ENCODE measurements at regions of chr4 and their contacts with region 1.

Region 1: DNA sequence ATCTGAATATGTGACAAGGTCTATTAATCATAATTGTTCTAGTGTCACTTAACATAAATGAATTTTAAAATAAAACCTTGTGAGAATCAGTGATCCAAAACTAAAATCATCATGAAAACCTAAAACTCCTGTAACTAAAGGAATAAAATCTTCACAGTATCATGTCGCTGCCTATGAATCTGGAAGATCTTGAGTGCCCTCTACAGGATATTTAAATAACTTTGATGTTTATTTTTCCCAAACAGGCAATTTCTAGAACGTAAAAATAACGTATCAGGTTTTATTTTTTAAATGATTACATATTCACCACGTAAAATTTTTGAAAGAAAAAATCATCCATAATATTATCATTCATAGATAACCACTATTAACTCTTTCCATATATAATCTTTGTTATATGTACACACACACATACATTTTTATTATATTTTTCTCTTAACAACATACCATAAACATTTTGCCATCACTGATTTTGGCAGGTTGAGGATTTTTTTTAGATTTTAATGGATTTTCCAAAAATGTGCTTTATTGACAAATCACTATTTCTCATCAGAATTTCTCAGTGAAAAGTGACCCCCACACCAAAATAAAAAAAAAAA is 79.6 kb downstream of the COMMD8 start:
- DNase-seq: peak; percentile 43
- H3K4me3 ChIP-seq: no peak overlapping the region
- H3K27ac ChIP-seq: no peak overlapping the region
- H3K4me1 ChIP-seq: no peaks in the 10 kb centered on the region
- CTCF ChIP-seq: peak; percentile 86

Region 2: DNA sequence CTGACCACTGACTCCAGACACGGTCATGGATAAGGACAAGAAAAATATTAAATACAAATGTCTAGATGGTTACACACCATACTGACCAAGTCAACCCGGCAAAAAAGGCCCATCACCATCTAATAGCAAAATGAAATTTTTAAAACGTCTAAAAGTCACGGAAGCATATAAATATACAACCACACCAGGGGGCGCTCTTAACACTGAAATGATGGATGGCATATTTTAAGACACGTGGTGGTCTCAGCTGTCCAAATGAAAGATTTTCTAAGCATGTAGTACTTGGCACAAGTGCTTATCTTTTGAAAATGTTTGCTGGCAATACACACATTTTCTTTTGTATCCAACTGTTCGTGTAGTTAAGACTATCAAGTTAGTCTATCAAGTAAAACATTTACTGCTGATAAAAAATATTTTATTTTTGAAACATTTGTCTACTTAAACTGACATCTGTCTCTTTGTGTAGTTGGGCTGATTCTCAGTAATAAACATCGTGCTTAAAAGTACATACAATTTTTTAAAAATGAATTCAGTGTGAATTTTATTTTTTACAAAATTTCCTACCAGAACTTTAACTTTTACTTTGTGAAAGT is 539.5 kb before region 1 on chr4:
- CTCF ChIA-PET with region 1: no interaction called
- POLR2A ChIA-PET with region 1: no interaction called
- intact Hi-C with region 1: loop called (anchors 2 kb)
- DNase-seq: peak; percentile 62
- H3K4me3 ChIP-seq: no peak overlapping the region
- H3K27ac ChIP-seq: no peak overlapping the region
- H3K4me1 ChIP-seq: no peaks in the 10 kb centered on the region
- CTCF ChIP-seq: peak; percentile 93

Region 3: GRCh38 chr4:46944345-46944744 is 439.6 kb before region 1 on chr4:
- CTCF ChIA-PET with region 1: no interaction called
- POLR2A ChIA-PET with region 1: no interaction called
- intact Hi-C with region 1: loop called (anchors 5 kb)
- DNase-seq: no peak
- H3K4me3 ChIP-seq: no peak overlapping the region
- H3K27ac ChIP-seq: no peak overlapping the region
- H3K4me1 ChIP-seq: no peaks in the 10 kb centered on the region
- CTCF ChIP-seq: no peak

Region 4: GRCh38 chr4:47368211-47368610 is 15.7 kb before region 1 on chr4:
- CTCF ChIA-PET with region 1: no interaction called
- POLR2A ChIA-PET with region 1: no interaction called
- intact Hi-C with region 1: no loop called
- DNase-seq: no peak
- H3K4me3 ChIP-seq: no peak overlapping the region
- H3K27ac ChIP-seq: no peak overlapping the region
- H3K4me1 ChIP-seq: no peaks in the 10 kb centered on the region
- CTCF ChIP-seq: no peak

Region 5: DNA sequence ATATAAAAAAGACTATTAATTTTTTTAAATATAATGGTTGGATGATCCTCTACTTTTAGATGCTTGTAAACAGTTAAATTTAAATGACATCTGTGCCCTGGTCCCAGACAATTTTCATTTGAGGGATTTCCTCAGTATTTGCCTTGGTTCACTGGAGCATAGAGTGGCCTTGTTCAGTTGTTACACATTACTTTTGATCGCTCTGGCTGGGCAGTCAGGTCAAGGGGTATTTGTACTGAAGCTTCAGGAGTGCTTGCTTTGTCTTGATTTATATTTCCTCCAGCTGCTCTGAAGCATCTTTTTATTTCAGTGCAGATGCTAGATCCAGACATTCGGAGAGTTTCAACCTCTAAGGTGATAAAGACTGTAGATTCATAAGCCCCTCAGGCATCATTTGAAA is 29.6 kb after region 1 on chr4:
- CTCF ChIA-PET with region 1: no interaction called
- POLR2A ChIA-PET with region 1: no interaction called
- intact Hi-C with region 1: no loop called
- DNase-seq: peak; percentile 45
- H3K4me3 ChIP-seq: no peak overlapping the region
- H3K27ac ChIP-seq: peak overlapping the region; percentile 33
- H3K4me1 ChIP-seq: peaks cover 8% of the 10 kb centered on the region
- CTCF ChIP-seq: no peak

Region 6: DNA sequence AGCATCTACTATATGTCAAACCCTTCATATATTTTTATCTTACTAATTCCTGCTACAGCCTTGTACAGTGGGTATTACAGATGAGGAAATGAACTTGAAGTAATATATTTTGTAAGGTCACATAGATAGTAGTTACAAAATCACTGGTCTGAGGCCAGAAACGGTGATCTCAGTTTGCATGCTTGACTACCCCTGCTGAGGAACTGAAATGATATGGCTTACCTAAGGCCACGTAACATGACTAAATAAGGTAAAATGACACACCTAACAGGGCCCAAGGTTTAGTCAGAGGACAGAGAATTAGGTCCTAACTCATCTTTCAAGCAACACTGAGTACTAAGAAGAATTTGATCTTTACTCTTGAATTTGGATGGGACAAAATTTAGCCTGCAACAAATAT is 81.1 kb after region 1 on chr4:
- CTCF ChIA-PET with region 1: no interaction called
- POLR2A ChIA-PET with region 1: no interaction called
- intact Hi-C with region 1: no loop called
- DNase-seq: peak; percentile 79
- H3K4me3 ChIP-seq: peak overlapping the region; percentile 3
- H3K27ac ChIP-seq: peak overlapping the region; percentile 81
- H3K4me1 ChIP-seq: peaks cover 45% of the 10 kb centered on the region
- CTCF ChIP-seq: no peak

Region 7: DNA sequence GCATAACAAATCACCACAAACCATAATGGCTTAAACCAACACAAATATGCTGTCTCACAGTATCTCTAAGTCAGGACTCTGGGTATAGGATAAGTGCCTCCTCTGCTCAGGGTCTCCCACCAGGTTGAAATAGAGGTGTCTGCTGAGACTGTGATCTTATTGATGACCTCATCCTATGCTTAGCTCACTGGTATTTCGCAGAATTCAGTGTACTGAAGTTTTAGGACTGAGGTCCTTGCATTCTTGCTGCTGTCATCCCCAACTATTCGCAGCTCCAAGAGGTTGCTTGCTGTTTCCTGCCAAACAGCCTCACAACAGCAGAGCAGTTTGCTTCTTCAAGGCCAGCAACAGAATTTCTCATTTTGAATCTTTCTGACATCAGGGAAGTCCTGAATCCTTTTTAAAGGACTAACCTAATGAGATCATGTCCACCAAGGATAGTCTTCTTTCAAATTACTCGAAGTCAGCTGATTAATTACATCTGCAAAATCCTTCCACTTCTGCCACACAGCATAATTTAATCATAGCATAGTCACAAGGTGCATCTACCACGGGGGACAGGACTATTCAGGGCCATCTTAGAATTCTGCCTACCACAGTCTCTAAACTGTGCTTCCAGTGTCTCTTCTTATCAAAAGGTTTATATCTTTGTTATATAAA is 154.7 kb after region 1 on chr4:
- CTCF ChIA-PET with region 1: no interaction called
- POLR2A ChIA-PET with region 1: no interaction called
- intact Hi-C with region 1: no loop called
- DNase-seq: no peak
- H3K4me3 ChIP-seq: no peak overlapping the region
- H3K27ac ChIP-seq: no peak overlapping the region
- H3K4me1 ChIP-seq: no peaks in the 10 kb centered on the region
- CTCF ChIP-seq: no peak